ENCODE measurements at regions of chr16 and their contacts with region 1.

Region 1: DNA sequence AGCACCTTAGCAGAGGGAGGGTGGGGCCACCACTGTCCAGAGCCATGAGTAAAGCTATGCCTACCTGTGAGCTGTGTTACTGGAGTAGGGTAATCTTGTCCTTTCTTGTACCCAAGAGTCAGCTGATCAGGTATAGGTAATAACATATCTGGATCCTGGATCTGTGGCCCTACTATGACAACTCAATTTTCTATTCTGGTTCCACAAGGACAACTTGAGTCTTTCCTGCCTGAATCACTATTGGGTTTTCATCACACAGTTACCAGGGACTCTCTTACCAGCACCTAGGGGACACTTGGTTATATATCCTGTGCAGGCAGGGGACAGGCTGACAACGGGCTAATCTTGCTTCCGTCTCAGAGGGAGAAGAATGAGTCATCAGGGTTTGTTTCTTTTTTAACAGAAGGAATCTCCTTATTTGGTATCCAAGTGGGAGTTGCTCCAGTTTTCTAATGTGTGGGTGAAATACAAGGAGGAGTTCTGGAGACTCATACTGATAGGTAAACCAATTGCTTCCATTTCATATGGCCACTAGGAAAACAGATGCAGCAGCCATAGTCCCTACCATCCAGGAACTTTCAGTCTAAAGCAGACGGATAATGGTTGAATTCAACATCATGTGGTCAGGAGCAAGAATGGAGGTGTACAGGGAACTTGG is 6.8 kb downstream of the ZNF267 start:
- DNase-seq: peak; percentile 77 to 97 (median 94)
- H3K4me3 ChIP-seq: peak overlapping the region in 4 of 7 experiments; percentile 7 to 51 (median 37)
- H3K27ac ChIP-seq: peak overlapping the region; percentile 72 to 86
- H3K4me1 ChIP-seq: peaks cover 11 to 57% (median 32%) of the 10 kb centered on the region in 4 experiments
- H3K27me3 ChIP-seq: no peaks in the 10 kb centered on the region

Region 2: GRCh38 chr16:31807086-31807485 is 73.4 kb before region 1 on chr16:
- CTCF ChIA-PET with region 1: no interaction called
- POLR2A ChIA-PET with region 1: no interaction called
- DNase-seq: no peak
- H3K4me3 ChIP-seq: no peak overlapping the region
- H3K27ac ChIP-seq: no peak overlapping the region
- H3K4me1 ChIP-seq: no peaks in the 10 kb centered on the region
- H3K27me3 ChIP-seq: no peaks in the 10 kb centered on the region

Region 3: GRCh38 chr16:31833047-31833446 is 47.4 kb before region 1 on chr16:
- CTCF ChIA-PET with region 1: no interaction called
- POLR2A ChIA-PET with region 1: no interaction called
- DNase-seq: no peak
- H3K4me3 ChIP-seq: no peak overlapping the region
- H3K27ac ChIP-seq: no peak overlapping the region
- H3K4me1 ChIP-seq: no peaks in the 10 kb centered on the region
- H3K27me3 ChIP-seq: no peaks in the 10 kb centered on the region

Region 4: GRCh38 chr16:31868691-31869167 is 11.7 kb before region 1 on chr16:
- CTCF ChIA-PET with region 1: interaction called, 11 read pairs
- POLR2A ChIA-PET with region 1: no interaction called
- DNase-seq: peak; percentile 67 to 81 (median 75)
- H3K4me3 ChIP-seq: peak overlapping the region in 5 of 7 experiments; percentile 26 to 58 (median 33)
- H3K27ac ChIP-seq: peak overlapping the region in 1 of 2 experiments; percentile 89
- H3K4me1 ChIP-seq: peaks cover 8 to 35% (median 27%) of the 10 kb centered on the region in 4 experiments
- H3K27me3 ChIP-seq: no peaks in the 10 kb centered on the region

Measured in common myeloid progenitor, CD34-positive (primary cell).